ENCODE measurements at regions of chr7 and their contacts with region 1.

Region 1: GRCh38 chr7:80428161-80429054 is 83.5 kb downstream of the GNAT3 start:
- DNase-seq: no peak
- ATAC-seq: peak; percentile 86 to 92

Region 2: GRCh38 chr7:80659120-80660055 is 231.0 kb after region 1 on chr7:
- intact Hi-C with region 1: loop called (anchors 5 to 10 kb)
- DNase-seq: no peak
- ATAC-seq: peak; percentile 33 to 35

Region 3: DNA sequence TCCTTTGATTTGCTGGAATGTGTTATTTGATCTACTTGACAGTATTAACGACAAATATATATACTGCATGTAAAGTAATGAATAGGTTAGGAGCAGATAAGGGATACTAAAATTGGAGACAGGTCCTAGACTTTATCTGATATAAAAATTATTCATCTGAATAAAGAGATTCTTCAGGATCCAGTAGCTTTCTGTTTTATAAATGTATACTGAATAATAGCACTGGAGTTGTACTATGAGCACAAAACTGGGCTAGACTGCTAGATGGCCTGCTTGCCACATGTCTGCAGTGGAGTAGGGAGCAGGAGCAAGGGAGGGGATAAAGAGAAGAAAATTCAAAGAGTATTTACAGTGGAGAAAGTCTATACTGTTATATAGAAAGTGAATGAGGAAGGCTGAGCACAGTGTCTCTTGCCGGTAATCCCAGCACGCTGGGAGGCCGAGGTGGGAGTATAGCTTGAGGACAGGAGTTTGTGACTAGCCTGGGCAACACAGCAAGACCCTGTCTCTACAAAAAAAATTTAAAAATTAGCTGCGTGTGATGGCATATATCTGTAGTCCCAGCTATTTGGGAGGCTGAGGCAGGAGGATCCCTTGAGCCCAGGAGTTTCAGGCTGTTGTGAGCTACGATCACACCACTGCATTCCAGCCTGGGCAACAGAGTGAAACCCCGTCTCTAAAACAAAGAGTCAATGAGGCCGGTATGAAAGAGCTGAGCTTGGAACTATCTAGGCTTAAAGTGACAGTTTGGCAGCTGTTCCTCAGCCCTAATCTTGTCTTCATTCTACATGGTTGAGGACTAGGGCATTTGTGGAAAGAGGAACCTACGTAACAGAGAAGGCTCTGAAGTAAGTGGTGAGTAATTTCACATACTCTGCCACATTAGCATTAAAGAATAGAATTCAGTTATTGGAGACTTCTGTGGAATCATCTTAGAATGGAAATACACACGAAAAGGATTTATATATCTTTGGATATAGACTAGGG is 251.8 kb after region 1 on chr7:
- intact Hi-C with region 1: loop called in 1 of 2 experiments (anchors 5 kb)
- DNase-seq: no peak
- ATAC-seq: peak; percentile 67 to 81

Measured in left cardiac atrium (tissue), 4 donors.